ENCODE measurements at regions of chr17 and their contacts with region 1.

Region 1: DNA sequence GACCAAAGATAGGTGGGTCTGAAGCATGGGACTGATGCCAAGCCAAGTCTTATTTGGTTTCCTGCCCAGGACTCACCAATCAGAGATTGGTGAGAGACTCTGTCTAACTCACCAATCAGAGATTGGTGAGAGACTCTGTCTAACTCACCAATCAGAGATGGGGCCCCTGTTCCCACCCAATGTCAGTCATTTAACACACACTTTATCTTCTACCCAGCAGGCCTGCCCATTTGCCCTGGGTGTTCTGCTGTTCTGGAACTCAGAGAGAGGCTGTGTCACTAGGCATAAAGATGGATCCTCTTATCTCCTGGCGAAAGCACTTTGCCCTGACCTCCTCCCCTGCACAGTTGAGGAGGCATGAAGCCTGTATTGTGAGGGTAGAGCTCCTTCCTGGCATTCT is 5.4 kb upstream of the RHOT1 start:
- DNase-seq: no peak
- ATAC-seq: no peak

Region 2: DNA sequence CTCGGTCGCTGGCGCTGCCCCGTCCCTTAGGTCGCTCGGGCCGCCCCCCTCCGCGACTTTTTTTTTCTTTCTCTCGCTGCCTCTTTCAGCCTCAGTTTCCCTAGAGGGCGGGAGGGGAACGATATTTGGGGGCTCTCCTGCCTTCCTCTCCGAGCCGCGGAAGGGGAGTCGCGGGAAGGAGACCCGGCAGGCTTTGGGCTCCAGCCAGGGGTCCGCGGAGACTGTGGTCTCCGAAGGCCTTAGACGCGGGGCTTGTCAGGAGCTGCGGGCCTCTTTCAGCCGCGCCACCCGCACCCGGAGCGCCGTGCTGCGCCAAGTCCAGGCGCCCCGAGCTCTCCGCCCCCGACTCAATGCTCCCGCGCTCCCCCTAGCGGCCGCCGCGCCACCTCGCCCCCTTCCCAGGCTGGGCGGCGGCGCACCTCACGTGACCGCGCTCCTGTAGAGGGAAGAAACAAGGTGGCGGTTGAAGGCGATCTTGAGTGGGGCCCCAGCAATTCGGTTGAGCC is 129.8 kb before region 1 on chr17 and contains the start of gene LRRC37B:
- intact Hi-C with region 1: loop called in 1 of 2 experiments (anchors 5 kb)
- DNase-seq: peak; percentile 88
- ATAC-seq: peak; percentile 99
- total RNA-seq, gene LRRC37B: 3.9 to 4.4 TPM

Measured in left cardiac atrium (tissue), 4 donors.